Activated naive CD8-positive, alpha-beta T cell treated with anti-CD3 and anti-CD28 coated beads, Interleukin-2, amount 10 ng/mL, durations not matched to agents 7 days and 5 days (primary cell): ENCODE measurements at regions of chr1 and their contacts with region 1.

Region 1: GRCh38 chr1:28359592-28360239 is 9.8 kb upstream of the PHACTR4 start:
- DNase-seq: peak; percentile 69
- ATAC-seq: peak; percentile 75
- H3K4me3 Mint-ChIP-seq: no peak overlapping the region
- H3K27ac Mint-ChIP-seq: no peak overlapping the region
- H3K4me1 Mint-ChIP-seq: peaks cover 4% of the 10 kb centered on the region
- H3K27me3 Mint-ChIP-seq: peaks cover 12% of the 10 kb centered on the region

Region 2: GRCh38 chr1:28512058-28512611 is 152.4 kb after region 1 on chr1:
- POLR2A ChIA-PET with region 1: interaction called, 10 read pairs
- DNase-seq: no peak
- ATAC-seq: no peak
- H3K4me3 Mint-ChIP-seq: peak overlapping the region; percentile 99
- H3K27ac Mint-ChIP-seq: peak overlapping the region; percentile 73
- H3K4me1 Mint-ChIP-seq: peaks cover 43% of the 10 kb centered on the region
- H3K27me3 Mint-ChIP-seq: no peaks in the 10 kb centered on the region